ENCODE measurements at regions of chr17 and their contacts with region 1.

Region 1: DNA sequence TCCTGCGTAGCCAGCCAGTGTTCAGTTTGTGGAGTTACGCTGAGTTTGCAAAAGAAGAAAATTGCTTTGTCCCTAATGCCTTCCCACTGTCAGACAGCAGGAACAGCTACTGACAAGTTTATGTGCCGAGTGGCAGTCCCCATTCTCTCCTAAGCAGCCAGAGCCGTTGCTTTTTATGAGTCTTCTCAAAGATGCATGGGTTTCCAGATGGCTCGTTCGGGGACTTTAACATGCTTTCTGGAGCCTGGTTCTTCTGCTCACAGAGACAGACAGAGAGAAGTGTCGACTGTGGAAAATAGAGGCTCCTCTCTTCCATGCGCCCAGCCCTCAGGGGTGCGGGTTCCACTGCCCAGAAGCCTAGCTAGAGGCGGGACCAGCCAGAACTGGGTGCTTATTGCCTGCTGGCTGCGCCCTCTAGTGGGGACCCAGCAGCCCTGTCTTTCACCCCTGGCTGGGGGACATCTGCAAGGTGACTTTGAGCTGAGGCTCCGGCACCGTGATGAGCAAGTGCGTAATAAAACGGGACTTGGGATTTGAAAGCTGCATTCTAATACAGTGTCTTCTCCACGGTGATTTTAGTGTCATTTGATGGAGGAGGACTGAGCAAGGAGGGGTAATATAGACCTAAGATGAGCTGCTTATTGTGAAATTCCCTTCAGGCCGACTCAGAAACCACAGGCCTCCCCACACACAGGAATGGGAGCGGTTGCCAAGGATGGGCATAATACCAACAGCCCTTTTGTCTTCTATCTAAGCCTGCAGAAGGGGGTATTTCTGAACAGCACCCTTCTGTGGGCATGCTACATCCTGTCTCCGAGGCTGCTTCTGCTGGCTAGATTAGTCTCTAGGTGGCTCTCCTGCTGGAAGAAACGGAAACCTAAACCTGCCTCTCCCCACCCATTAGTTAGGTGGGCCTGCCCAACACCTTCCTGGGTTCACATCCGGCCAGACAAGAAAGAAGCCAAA is 73.1 kb downstream of the CCDC182 start:
- DNase-seq: peak; percentile 87
- CTCF ChIP-seq: peak; percentile 94

Region 2: DNA sequence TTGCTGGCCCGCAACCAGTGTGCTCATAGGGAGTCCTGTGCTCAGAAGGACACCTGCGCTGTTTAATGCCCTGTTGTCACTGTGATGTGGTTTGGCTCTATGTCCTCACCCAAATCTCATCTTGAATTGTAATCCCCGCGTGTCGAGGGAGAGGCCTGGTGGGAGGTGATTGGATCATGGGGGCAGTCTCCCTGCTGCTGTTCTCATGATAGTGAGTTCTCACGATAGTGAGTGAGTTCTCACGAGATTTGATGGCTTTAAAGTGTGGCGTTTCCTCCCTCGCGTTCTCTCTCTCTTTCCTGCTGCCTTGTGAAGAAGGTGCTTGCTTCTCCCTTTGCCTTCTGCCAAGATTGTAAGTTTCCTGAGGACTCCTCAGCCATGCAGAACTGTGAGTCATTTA is 520.2 kb before region 1 on chr17:
- CTCF ChIA-PET with region 1: no interaction called
- POLR2A ChIA-PET with region 1: no interaction called
- DNase-seq: no peak
- CTCF ChIP-seq: no peak

Region 3: GRCh38 chr17:57552114-57552624 is 119.8 kb before region 1 on chr17:
- CTCF ChIA-PET with region 1: interaction called, 29 read pairs
- POLR2A ChIA-PET with region 1: no interaction called
- DNase-seq: peak; percentile 80
- CTCF ChIP-seq: peak; percentile 78

Region 4: DNA sequence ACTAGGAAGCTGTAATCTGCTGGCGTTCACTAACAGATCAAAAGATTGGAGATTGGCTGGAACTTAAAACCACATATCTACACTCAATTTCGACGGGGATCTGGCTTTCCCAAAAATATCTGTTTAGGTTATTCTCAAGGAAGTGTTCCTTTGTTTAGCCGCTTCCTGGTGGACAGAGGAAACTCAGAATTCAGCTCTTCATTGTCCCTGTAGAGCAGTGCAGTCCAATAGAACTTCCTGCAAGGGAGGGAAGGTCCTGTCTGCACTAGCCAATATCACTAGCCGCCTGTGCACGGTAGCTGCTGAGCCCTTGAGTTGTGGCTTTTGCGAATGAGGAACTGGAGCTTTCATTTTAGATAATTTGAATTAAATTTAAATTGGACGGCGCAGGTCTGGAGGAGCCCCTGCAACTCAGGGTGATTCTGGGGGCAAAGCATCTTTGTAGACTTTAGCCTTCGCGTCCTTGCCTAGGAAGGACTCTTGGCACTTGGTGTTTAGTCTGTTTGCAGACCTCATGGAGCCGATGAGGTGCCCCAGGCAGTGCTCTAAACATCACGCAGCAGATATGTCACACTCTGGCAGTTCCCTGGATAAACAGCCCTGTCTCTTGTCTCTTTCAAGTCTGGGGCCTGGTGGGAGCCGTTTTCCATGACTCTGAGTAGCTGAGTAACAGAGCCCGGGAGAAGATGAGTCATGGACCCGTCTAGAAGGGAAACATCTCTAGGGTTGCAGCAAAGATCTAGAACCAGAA is 49.1 kb before region 1 on chr17:
- CTCF ChIA-PET with region 1: interaction called, 13 read pairs
- POLR2A ChIA-PET with region 1: no interaction called
- DNase-seq: peak; percentile 70
- CTCF ChIP-seq: no peak

Region 5: GRCh38 chr17:57649731-57650484 is 22.0 kb before region 1 on chr17:
- CTCF ChIA-PET with region 1: interaction called, 21 read pairs
- POLR2A ChIA-PET with region 1: no interaction called
- DNase-seq: no peak
- CTCF ChIP-seq: no peak

Region 6: GRCh38 chr17:57685505-57686132 is 13.7 kb after region 1 on chr17:
- CTCF ChIA-PET with region 1: interaction called, 13 read pairs
- POLR2A ChIA-PET with region 1: no interaction called
- DNase-seq: no peak
- CTCF ChIP-seq: no peak

Region 7: GRCh38 chr17:57778306-57778705 is 106.4 kb after region 1 on chr17:
- CTCF ChIA-PET with region 1: no interaction called
- POLR2A ChIA-PET with region 1: no interaction called
- DNase-seq: no peak
- CTCF ChIP-seq: no peak